Activated CD4-positive, alpha-beta T cell treated with anti-CD3 and anti-CD28 coated beads for 36 hours (primary cell): ENCODE measurements at regions of chr2 and their contacts with region 1.

Region 1: DNA sequence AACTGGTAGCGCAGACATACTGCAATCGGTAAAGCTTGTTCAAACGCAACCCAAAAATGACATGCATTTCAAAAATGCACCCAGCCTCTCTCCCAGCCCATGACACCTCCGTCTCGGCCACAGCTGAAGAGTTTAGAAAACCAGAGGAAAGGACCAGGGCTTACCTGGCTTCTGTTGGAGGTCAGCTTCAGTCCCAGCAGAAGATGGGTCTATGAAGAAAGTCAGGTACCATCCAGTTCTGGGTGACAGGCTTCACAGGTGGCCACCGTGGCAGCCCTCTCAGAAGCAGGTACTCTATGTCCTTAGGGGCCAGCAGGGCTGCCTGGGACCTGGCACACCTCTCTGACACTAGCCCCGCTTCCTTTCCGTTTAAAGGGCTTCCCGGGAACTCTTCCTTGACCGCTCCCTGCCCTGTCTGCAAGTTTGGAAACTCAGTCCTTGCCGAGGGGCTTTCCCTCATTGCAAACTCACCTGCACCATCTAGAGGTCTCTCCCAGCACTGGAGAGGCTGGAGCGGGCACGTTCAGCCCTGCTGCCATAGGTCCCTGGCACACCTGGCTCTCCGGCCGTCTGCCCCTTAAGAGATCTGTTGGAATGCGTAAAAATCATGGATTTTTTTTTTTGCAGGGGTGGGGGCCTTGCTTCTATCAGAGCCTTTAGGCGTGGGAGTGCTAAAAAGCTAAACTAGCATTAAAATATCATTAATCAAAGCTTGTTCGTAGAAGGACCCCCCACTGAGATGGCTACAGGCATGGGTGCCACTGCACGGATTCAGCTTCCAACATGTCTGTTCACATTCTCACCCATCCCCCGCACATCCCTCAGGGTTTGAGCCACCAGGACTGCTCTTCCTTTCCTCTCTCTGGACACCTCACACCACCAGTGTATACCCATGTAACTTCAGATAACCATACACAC is at the start of gene EDAR:
- DNase-seq: peak; percentile 77
- ATAC-seq: peak; percentile 74
- H3K4me3 Mint-ChIP-seq: peak within 1 kb of the TSS; percentile 74
- H3K27ac Mint-ChIP-seq: peak within 1 kb of the TSS; percentile 71
- H3K4me1 Mint-ChIP-seq: peaks cover 55% of the 10 kb centered on the region
- H3K27me3 Mint-ChIP-seq: no peaks in the 10 kb centered on the region
- total RNA-seq, gene EDAR: 0.78 to 0.81 TPM

Region 2: GRCh38 chr2:107936433-107937359 is 1052.4 kb before region 1 on chr2:
- CTCF ChIA-PET with region 1: no interaction called
- POLR2A ChIA-PET with region 1: no interaction called
- intact Hi-C with region 1: loop called in 1 of 2 experiments (anchors 5 kb)
- DNase-seq: peak; percentile 34
- ATAC-seq: no peak
- H3K4me3 Mint-ChIP-seq: no peak overlapping the region
- H3K27ac Mint-ChIP-seq: no peak overlapping the region
- H3K4me1 Mint-ChIP-seq: no peaks in the 10 kb centered on the region
- H3K27me3 Mint-ChIP-seq: peaks cover 2% of the 10 kb centered on the region

Region 3: GRCh38 chr2:108377815-108378630 is 611.0 kb before region 1 on chr2 and contains the start of gene SULT1C4:
- CTCF ChIA-PET with region 1: no interaction called
- POLR2A ChIA-PET with region 1: no interaction called
- intact Hi-C with region 1: no loop called
- DNase-seq: no peak
- ATAC-seq: no peak
- H3K4me3 Mint-ChIP-seq: no peak within 1 kb of the TSS
- H3K27ac Mint-ChIP-seq: no peak within 1 kb of the TSS
- H3K4me1 Mint-ChIP-seq: no peaks in the 10 kb centered on the region
- H3K27me3 Mint-ChIP-seq: peaks cover 2% of the 10 kb centered on the region
- total RNA-seq, gene SULT1C4: not detected

Region 4: DNA sequence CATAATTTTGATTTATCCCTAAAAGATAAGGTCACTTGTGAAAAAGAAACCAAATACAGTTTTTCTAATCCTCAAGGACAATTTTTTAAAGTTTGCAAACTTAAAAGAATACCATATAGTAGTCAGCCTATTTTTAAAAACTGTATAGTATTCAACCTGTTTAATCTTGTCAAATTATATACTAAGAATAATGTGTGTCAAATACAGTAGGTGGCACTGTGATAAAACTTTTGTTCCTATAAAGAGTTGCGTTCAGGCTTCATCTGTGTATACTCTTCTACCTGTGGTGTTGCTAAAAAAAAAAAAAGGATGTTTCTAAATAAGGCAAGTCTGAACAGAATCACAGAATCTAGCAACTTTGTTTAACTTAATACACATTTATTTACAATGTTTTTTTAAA is 133.9 kb before region 1 on chr2:
- CTCF ChIA-PET with region 1: interaction called, 13 read pairs
- POLR2A ChIA-PET with region 1: no interaction called
- intact Hi-C with region 1: loop called (anchors 1 to 2 kb)
- DNase-seq: no peak
- ATAC-seq: peak; percentile 63
- H3K4me3 Mint-ChIP-seq: no peak overlapping the region
- H3K27ac Mint-ChIP-seq: no peak overlapping the region
- H3K4me1 Mint-ChIP-seq: no peaks in the 10 kb centered on the region
- H3K27me3 Mint-ChIP-seq: no peaks in the 10 kb centered on the region

Region 5: GRCh38 chr2:108933691-108934117 is 55.4 kb before region 1 on chr2:
- CTCF ChIA-PET with region 1: interaction called, 58 read pairs
- POLR2A ChIA-PET with region 1: no interaction called
- intact Hi-C with region 1: loop called (anchors 1 kb)
- DNase-seq: no peak
- ATAC-seq: no peak
- H3K4me3 Mint-ChIP-seq: no peak overlapping the region
- H3K27ac Mint-ChIP-seq: no peak overlapping the region
- H3K4me1 Mint-ChIP-seq: peaks cover 25% of the 10 kb centered on the region
- H3K27me3 Mint-ChIP-seq: no peaks in the 10 kb centered on the region

Region 6: DNA sequence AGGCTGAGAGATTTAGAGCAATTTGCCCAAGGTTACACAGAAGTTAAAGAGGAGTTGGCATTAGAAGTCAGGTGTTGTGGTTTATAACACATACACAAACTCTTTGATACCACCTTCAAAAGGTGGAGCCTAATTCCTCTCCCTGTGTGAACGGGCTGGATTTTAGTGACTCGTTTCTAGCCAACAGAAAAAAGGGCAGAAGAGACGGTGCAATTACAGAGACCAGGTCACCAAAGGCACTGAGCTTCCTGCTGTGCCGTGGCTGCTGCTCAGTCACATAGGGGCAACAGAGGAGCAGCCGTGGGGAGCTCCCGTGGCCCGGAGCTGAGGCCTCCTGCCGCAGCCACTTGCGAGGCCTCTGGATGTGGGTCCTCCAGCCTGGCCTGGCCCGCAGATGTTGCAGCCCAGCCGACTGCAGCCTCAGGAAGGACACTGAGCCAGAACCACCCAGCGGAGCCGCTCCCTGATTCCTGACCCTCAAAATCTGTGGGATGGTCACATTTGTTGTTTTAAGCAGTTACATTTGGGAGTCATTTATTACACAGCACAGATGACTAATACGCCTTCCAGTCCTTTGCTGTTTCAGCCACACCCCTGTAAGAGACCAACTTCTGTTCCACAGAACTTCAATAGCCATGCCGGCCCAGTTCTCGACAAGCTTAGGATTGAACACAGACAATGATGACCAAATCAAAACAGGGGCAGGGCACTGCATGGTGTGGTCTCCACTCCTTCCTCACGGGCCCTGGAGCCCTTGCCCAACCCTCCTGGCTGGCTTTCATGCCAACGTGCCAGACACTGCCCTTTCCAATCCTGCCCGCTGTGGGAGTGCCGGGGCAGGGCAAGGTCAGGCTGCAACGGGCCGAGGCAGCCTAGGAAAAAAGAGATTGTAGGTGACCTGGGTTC is 17.1 kb before region 1 on chr2:
- CTCF ChIA-PET with region 1: interaction called, 18 read pairs
- POLR2A ChIA-PET with region 1: interaction called, 4 read pairs
- intact Hi-C with region 1: no loop called
- DNase-seq: no peak
- ATAC-seq: peak; percentile 38
- H3K4me3 Mint-ChIP-seq: no peak overlapping the region
- H3K27ac Mint-ChIP-seq: peak overlapping the region; percentile 29
- H3K4me1 Mint-ChIP-seq: peaks cover 70% of the 10 kb centered on the region
- H3K27me3 Mint-ChIP-seq: no peaks in the 10 kb centered on the region

Region 7: DNA sequence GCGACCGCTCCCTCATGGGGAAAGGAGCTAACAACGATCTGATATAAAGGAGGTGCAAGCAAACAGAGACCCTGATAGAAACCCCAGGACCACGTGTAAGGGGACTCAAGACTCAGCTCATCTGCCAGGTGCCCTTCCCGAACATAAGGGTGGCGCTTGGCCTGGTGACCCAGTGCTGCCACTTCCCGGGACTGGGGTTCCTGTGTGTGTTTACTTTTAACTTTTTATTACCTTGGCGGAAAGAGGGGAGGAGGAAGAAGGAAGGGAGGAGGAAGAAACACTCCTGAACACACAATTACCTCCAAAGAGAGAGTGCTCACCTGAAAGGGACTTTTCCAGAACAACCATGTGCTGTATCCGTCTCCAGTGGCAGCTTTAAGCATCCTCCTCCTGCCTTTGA is 56.5 kb after region 1 on chr2:
- CTCF ChIA-PET with region 1: no interaction called
- POLR2A ChIA-PET with region 1: no interaction called
- intact Hi-C with region 1: no loop called
- DNase-seq: no peak
- ATAC-seq: no peak
- H3K4me3 Mint-ChIP-seq: no peak overlapping the region
- H3K27ac Mint-ChIP-seq: no peak overlapping the region
- H3K4me1 Mint-ChIP-seq: peaks cover 18% of the 10 kb centered on the region
- H3K27me3 Mint-ChIP-seq: no peaks in the 10 kb centered on the region

Region 8: DNA sequence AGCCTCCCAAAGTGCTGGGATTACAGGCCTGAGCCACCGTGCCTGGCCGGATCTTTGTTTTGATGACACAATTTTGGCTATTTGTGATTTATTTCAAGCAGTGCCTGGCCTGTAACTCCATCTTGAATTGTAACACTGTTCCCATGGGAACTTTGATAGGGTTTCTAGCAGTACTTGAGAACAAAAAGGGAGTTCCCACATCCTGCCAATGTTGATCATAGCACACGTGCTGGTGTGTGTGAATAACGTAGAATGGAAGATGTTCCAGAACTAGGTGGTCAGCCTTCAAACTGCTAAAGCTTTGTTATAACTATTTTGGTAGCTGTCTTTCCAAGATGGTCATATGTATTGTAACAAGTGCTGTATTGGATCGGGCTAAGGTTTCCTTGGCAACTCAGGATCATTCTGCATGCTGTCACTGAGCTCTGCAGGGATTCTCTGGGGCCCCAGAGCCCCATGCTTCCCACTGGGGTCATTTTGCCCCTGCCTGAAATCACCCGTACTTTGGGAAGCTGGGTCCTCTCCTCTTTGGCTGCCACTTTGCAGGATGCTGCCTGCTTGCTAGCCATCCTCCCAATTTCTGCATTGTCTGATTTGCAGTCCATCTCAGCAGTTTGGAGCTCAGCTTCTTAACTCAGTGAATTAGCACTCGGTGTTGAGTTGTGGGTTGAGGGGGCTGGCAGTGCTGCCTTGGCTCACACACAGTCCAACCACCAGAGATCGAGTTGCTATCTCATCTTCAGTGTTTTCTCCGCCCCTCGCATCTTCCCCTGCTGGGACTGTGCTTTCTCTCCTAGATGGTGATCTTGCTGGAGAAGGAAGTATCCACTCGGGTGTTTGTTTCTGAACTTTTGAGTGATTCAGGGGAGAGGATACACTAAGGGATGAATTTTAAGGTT is 166.7 kb after region 1 on chr2:
- CTCF ChIA-PET with region 1: no interaction called
- POLR2A ChIA-PET with region 1: no interaction called
- intact Hi-C with region 1: no loop called
- DNase-seq: no peak
- ATAC-seq: no peak
- H3K4me3 Mint-ChIP-seq: no peak overlapping the region
- H3K27ac Mint-ChIP-seq: no peak overlapping the region
- H3K4me1 Mint-ChIP-seq: peaks cover 11% of the 10 kb centered on the region
- H3K27me3 Mint-ChIP-seq: no peaks in the 10 kb centered on the region